Tibial artery (tissue), 4 donors: ENCODE measurements at regions of chr15 and their contacts with region 1.

Region 1: GRCh38 chr15:43903864-43904290 is 77.1 kb downstream of the WDR76 start:
- DNase-seq: peak in 1 of 2 donors; percentile 36
- H3K4me3 ChIP-seq: no peak overlapping the region
- H3K27ac ChIP-seq: no peak overlapping the region
- H3K4me1 ChIP-seq: no peaks in the 10 kb centered on the region
- H3K27me3 ChIP-seq: peaks cover 0 to 5% of the 10 kb centered on the region in 2 donors
- CTCF ChIP-seq: peak; percentile 74

Region 2: DNA sequence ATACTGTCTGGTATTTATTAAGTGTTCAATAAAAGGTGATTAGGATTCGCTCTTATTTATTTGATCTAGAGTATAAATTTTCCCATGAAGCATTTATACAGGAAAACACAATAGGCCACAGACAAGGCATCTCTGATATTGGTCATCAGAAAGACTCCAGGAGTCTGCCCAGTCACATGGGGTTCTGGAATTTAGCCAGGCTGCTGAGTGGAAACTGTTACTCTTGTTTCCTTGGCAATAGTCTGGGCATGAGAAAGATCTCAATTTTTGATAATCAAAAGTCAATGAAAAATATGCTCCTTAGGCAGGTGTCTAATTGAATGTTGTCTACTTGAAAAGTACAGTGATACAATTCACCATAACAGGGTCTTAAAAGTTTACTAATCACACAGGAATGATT is 130.0 kb after region 1 on chr15:
- intact Hi-C with region 1: no loop called
- DNase-seq: peak in 1 of 2 donors; percentile 21
- H3K4me3 ChIP-seq: no peak overlapping the region
- H3K27ac ChIP-seq: no peak overlapping the region
- H3K4me1 ChIP-seq: peaks cover 0 to 16% (median 8%) of the 10 kb centered on the region in 4 donors
- H3K27me3 ChIP-seq: peaks cover 0 to 4% of the 10 kb centered on the region in 2 donors
- CTCF ChIP-seq: no peak

Region 3: DNA sequence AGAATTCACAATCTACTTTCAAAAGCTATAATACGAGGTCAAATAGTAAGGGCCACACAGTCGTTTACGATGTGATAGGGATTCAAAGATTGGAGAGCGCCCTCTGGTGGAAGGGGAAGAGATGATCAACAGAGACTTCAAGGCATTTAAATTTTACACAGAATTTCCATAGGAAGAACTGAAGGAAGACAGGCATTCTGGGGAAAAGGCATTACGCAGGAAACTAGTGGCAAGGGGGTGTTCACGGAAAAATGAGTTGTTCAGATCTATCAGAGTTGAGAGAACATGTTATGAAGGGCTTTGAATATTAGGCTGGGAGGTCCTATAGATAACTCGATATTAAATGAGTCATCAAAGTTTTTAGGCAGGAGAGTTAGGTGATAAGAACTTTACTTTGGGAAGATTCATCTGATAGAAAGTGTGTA is 162.5 kb after region 1 on chr15:
- intact Hi-C with region 1: loop called (anchors 5 kb)
- DNase-seq: no peak
- H3K4me3 ChIP-seq: no peak overlapping the region
- H3K27ac ChIP-seq: no peak overlapping the region
- H3K4me1 ChIP-seq: no peaks in the 10 kb centered on the region
- H3K27me3 ChIP-seq: no peaks in the 10 kb centered on the region
- CTCF ChIP-seq: peak; percentile 39 to 42

Region 4: GRCh38 chr15:44490628-44491027 is 586.8 kb after region 1 on chr15:
- intact Hi-C with region 1: loop called (anchors 10 kb)
- DNase-seq: no peak
- H3K4me3 ChIP-seq: no peak overlapping the region
- H3K27ac ChIP-seq: no peak overlapping the region
- H3K4me1 ChIP-seq: peaks cover 0 to 7% (median 0%) of the 10 kb centered on the region in 4 donors
- H3K27me3 ChIP-seq: no peaks in the 10 kb centered on the region
- CTCF ChIP-seq: no peak